Activated T-helper 2 cell treated with anti-CD3 and anti-CD28 coated beads, Interferon-gamma antibody, Interleukin-2, Interleukin-4, amounts not matched to agents 10 μg/mL and 5 μg/mL and 100 μg/mL, durations not matched to agents 14 hours and 24 hours and 36 hours (primary cell): ENCODE measurements at regions of chr10 and their contacts with region 1.

Region 1: DNA sequence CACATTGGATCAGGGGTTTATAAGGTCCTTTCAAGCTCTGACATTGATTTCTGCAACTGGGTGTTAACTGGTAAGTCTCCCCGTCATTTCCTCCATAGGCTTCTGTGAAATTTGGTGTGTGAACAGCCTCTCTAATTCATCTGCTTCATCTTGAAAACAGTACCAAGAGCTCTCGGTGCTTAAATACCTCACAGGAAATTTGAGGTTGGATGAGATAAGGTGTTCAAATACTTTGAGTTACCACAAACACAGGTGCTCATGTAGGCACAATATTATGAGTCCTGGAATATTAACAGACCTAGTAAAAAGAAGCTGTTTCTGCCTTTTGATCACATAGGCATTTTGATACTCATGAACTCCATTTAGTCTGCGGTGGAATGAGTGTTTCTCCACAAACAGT is 85.2 kb downstream of the RTKN2 start:
- DNase-seq: peak; percentile 52
- H3K4me3 Mint-ChIP-seq: no peak overlapping the region
- H3K27ac Mint-ChIP-seq: peak overlapping the region; percentile 96
- H3K4me1 Mint-ChIP-seq: peaks cover 76% of the 10 kb centered on the region
- H3K27me3 Mint-ChIP-seq: no peaks in the 10 kb centered on the region

Region 2: DNA sequence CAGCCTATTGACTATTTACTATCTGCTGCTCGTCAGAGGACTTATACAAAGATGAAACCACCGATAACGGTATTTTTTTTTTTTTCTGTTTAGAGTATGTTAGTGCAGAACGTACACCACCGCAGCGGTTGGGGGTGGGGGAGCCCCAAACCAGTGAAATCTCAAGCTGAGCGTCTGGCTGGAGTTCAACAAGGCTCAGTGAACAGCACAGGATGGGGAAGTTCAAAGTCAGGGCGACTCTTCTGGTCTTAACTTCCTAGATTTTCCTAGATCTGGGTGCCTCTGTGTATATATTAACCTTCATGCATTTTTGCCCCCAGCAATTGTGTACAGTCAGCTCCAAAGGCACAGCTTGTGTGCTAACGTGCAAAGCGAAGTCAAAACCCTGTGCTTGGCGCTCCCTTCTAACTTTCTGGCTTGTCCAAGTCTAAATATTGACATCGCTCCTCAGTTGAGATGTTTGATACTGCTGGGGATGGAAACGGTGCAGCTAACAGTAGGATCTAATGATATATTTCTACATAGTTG is 1240.6 kb before region 1 on chr10:
- intact Hi-C with region 1: no loop called
- DNase-seq: peak; percentile 39
- H3K4me3 Mint-ChIP-seq: peak overlapping the region; percentile 71
- H3K27ac Mint-ChIP-seq: peak overlapping the region; percentile 21
- H3K4me1 Mint-ChIP-seq: peaks cover 9% of the 10 kb centered on the region
- H3K27me3 Mint-ChIP-seq: peaks cover 77% of the 10 kb centered on the region

Region 3: GRCh38 chr10:61565819-61566560 is 617.5 kb before region 1 on chr10:
- intact Hi-C with region 1: no loop called
- DNase-seq: no peak
- H3K4me3 Mint-ChIP-seq: no peak overlapping the region
- H3K27ac Mint-ChIP-seq: no peak overlapping the region
- H3K4me1 Mint-ChIP-seq: no peaks in the 10 kb centered on the region
- H3K27me3 Mint-ChIP-seq: no peaks in the 10 kb centered on the region

Region 4: GRCh38 chr10:61896854-61897661 is 286.4 kb before region 1 on chr10:
- intact Hi-C with region 1: loop called (anchors 1 kb)
- DNase-seq: peak; percentile 56
- H3K4me3 Mint-ChIP-seq: peak overlapping the region; percentile 73
- H3K27ac Mint-ChIP-seq: peak overlapping the region; percentile 83
- H3K4me1 Mint-ChIP-seq: peaks cover 42% of the 10 kb centered on the region
- H3K27me3 Mint-ChIP-seq: no peaks in the 10 kb centered on the region

Region 5: DNA sequence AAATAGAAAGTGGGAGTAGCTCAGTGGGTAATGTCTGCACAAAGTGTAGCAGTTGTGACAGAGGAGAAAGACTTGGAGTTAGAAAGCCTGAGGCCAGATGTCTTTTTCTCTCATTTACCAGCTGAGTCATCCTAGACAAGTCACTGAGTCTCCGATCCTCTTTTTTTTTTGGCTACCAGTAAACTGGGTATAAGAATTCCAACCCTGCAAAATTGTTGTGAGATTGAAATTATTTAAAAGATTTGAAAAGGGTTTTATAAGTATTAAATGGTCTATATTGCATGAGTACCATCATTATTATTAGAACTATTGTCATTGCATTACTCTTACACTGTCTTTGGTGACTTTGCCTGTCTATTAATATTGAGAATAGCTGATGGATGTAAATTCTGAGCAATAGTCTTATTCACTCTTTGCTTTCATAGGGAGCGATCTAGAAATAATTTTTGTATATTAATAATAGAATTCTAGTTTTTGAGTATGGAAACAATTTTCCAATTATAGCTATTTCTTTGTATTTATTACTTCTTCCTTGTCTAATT is 208.0 kb before region 1 on chr10:
- intact Hi-C with region 1: no loop called
- DNase-seq: no peak
- H3K4me3 Mint-ChIP-seq: no peak overlapping the region
- H3K27ac Mint-ChIP-seq: no peak overlapping the region
- H3K4me1 Mint-ChIP-seq: peaks cover 27% of the 10 kb centered on the region
- H3K27me3 Mint-ChIP-seq: no peaks in the 10 kb centered on the region

Region 6: DNA sequence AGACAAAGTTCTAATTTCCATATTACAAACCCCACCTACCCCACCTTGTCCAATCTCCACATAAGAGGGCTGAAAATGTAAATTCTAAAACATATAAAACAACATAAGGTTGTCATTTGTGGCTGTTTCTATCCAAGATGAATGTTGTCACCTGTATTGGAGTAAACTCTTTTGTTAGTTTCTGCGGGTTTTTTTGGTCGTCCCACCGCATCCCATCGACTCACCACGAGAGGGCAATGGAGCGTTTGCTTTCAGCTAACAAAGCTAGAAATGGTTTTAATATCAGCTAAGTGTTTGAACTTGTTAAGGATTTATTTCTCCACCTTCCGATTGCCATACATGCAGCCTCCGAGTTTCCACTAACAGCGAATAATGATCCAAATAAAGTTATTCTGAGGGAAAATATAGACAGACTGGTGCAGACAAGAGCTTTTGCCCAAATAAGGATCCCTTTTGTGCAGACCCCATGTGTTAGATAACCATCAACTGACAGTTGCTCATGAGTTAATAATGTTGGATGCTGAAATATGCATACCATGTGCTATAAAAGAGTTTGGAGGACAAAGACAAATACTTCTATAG is 144.7 kb before region 1 on chr10:
- intact Hi-C with region 1: loop called (anchors 1 kb)
- DNase-seq: peak; percentile 71
- H3K4me3 Mint-ChIP-seq: peak overlapping the region; percentile 51
- H3K27ac Mint-ChIP-seq: peak overlapping the region; percentile 72
- H3K4me1 Mint-ChIP-seq: peaks cover 67% of the 10 kb centered on the region
- H3K27me3 Mint-ChIP-seq: no peaks in the 10 kb centered on the region

Region 7: GRCh38 chr10:62199584-62199983 is 16.1 kb after region 1 on chr10:
- intact Hi-C with region 1: loop called (anchors 1 kb)
- DNase-seq: no peak
- H3K4me3 Mint-ChIP-seq: no peak overlapping the region
- H3K27ac Mint-ChIP-seq: peak overlapping the region; percentile 14
- H3K4me1 Mint-ChIP-seq: peaks cover 26% of the 10 kb centered on the region
- H3K27me3 Mint-ChIP-seq: no peaks in the 10 kb centered on the region

Region 8: DNA sequence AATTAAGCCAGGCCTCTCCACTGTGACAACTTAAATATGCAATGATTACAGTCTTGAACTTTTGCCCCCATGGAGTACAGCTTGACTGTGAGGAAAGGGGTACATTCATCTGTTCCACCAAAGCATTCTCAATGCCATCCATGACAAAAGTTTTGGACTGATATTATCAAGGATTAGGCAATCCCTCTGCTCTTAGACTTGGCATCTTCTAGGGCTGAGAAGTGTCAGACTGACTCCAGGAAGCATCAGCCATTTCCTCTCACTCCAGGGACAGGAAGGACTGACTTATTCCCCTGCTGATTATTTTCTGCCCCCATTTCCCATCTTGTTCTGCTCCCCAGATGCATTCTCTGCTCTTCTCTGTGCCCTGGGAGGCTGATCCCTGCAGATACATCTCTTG is 260.4 kb after region 1 on chr10:
- intact Hi-C with region 1: no loop called
- DNase-seq: no peak
- H3K4me3 Mint-ChIP-seq: no peak overlapping the region
- H3K27ac Mint-ChIP-seq: no peak overlapping the region
- H3K4me1 Mint-ChIP-seq: no peaks in the 10 kb centered on the region
- H3K27me3 Mint-ChIP-seq: peaks cover 39% of the 10 kb centered on the region

Region 9: DNA sequence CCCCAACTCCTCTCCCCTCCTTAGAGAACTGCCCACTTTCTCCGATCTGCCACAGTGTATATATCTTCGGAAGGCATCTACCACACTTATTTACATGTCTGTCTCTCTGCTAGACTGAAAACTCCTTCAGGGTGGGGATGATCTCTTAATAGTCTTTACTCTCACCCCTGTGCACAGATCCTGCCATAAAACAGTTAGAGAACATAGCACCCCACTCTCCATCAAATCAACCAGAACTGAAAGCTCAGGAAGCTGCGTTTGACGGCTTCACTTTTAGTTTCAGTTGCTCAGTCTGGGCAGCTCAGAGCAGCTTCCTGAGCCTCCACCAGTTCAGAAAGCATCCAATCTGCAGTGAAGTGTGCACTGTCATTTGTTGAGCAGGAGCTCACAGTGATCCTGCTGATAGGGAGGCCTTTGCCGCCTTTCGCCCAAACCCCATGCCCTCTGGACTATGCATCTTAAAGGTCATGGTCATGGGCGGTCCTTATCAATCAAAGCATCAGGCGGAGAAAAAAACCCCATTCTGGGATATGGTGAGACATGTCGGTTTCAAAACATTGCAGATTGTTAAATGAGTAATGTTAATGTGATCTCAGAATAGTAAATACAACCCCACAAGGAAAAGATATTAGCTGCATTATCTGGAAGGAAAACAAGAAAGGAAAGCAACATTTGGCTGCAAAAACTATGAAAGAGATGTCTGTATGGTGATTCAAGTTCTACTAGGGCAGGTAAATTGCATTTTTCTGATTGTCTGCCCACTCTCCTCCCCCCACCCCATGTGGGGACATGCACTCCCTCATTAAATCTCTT is 454.0 kb after region 1 on chr10:
- intact Hi-C with region 1: loop called (anchors 5 kb)
- DNase-seq: peak; percentile 75
- H3K4me3 Mint-ChIP-seq: no peak overlapping the region
- H3K27ac Mint-ChIP-seq: no peak overlapping the region
- H3K4me1 Mint-ChIP-seq: peaks cover 37% of the 10 kb centered on the region
- H3K27me3 Mint-ChIP-seq: no peaks in the 10 kb centered on the region

Region 10: DNA sequence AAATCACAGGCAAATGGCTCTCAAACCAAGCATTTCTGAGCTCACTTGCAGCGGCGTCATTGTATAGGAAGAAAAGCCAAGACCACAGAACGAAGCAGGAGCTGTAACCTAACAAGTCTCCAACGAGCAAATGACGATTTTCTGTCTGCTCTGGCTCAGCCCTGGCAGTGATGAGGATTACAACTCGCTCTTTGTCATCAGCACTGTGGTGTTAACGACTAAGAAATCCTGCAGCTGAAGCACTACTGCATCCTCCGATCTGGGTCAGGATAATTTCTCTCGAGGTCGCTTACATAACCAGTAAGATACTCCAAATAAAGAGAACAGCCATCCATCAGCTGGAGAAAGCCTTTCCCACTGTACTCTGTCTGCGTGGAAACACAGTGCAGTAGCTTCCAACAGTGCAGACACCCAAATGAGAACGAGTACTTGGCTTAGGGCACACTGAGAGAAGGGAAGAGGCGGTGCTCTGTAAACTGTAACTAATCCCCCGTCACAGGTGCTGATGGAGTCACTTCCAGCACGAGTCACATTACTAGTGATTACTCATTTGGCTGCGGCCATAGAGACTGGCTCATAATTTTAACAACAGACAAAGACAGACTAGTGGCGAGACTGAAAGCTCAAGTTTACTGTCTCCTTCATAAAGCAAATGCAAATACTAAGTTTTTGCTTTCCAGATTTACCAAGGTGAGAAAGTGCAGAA is 1085.5 kb after region 1 on chr10:
- intact Hi-C with region 1: loop called (anchors 10 kb)
- DNase-seq: peak; percentile 81
- H3K4me3 Mint-ChIP-seq: peak overlapping the region; percentile 92
- H3K27ac Mint-ChIP-seq: peak overlapping the region; percentile 94
- H3K4me1 Mint-ChIP-seq: peaks cover 25% of the 10 kb centered on the region
- H3K27me3 Mint-ChIP-seq: no peaks in the 10 kb centered on the region